PC-9 (cell line): ENCODE measurements at regions of chr3 and their contacts with region 1.

Region 1: GRCh38 chr3:75171630-75172230 is 492.4 kb upstream of the FRG2C start:
- DNase-seq: no peak
- H3K4me3 ChIP-seq: no peak overlapping the region
- H3K27ac ChIP-seq: no peak overlapping the region
- H3K4me1 ChIP-seq: no peaks in the 10 kb centered on the region
- H3K27me3 ChIP-seq: no peaks in the 10 kb centered on the region
- CTCF ChIP-seq: peak; percentile 53

Region 2: GRCh38 chr3:73508330-73508954 is 1663.3 kb before region 1 on chr3:
- CTCF ChIA-PET with region 1: no interaction called
- POLR2A ChIA-PET with region 1: no interaction called
- intact Hi-C with region 1: loop called (anchors 5 kb)
- DNase-seq: peak in 1 of 2 experiments; percentile 16
- H3K4me3 ChIP-seq: no peak overlapping the region
- H3K27ac ChIP-seq: no peak overlapping the region
- H3K4me1 ChIP-seq: no peaks in the 10 kb centered on the region
- H3K27me3 ChIP-seq: peaks cover 20% of the 10 kb centered on the region
- CTCF ChIP-seq: peak; percentile 71

Region 3: GRCh38 chr3:73874601-73875369 is 1296.9 kb before region 1 on chr3:
- CTCF ChIA-PET with region 1: no interaction called
- POLR2A ChIA-PET with region 1: no interaction called
- intact Hi-C with region 1: loop called (anchors 10 kb)
- DNase-seq: no peak
- H3K4me3 ChIP-seq: no peak overlapping the region
- H3K27ac ChIP-seq: no peak overlapping the region
- H3K4me1 ChIP-seq: no peaks in the 10 kb centered on the region
- H3K27me3 ChIP-seq: no peaks in the 10 kb centered on the region
- CTCF ChIP-seq: no peak

Region 4: GRCh38 chr3:75192146-75192616 is 20.5 kb after region 1 on chr3:
- CTCF ChIA-PET with region 1: no interaction called
- POLR2A ChIA-PET with region 1: no interaction called
- intact Hi-C with region 1: no loop called
- DNase-seq: peak in 1 of 2 experiments; percentile 29
- H3K4me3 ChIP-seq: no peak overlapping the region
- H3K27ac ChIP-seq: no peak overlapping the region
- H3K4me1 ChIP-seq: no peaks in the 10 kb centered on the region
- H3K27me3 ChIP-seq: no peaks in the 10 kb centered on the region
- CTCF ChIP-seq: peak; percentile 88

Region 5: DNA sequence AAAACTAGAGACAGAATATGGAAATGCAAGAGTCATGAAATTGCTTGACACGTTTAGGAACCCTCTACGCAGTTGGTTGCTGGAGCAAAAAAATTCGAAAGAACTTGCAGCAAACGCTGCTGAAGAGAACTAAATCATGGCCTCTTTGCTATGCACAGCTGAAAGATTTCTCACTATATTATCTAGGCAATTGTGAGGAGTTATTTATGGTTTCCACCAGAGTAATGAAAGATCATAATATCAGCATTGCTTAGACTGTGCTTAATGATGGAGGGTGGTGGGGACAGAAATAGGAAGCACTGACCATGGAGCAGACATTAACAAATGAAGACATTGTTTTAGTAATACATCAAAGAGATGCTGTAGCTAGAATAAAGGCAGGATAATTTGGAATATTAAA is 1207.1 kb after region 1 on chr3:
- CTCF ChIA-PET with region 1: no interaction called
- POLR2A ChIA-PET with region 1: no interaction called
- intact Hi-C with region 1: no loop called
- DNase-seq: no peak
- H3K4me3 ChIP-seq: no peak overlapping the region
- H3K27ac ChIP-seq: no peak overlapping the region
- H3K4me1 ChIP-seq: no peaks in the 10 kb centered on the region
- H3K27me3 ChIP-seq: no peaks in the 10 kb centered on the region
- CTCF ChIP-seq: no peak